ENCODE measurements at regions of chr11 and their contacts with region 1.

Region 1: GRCh38 chr11:130861902-130862860 is 54.1 kb downstream of the SNX19 start:
- DNase-seq: peak; percentile 81
- H3K4me3 Mint-ChIP-seq: no peak overlapping the region
- H3K27ac Mint-ChIP-seq: no peak overlapping the region
- H3K4me1 Mint-ChIP-seq: peaks cover 7% of the 10 kb centered on the region
- H3K27me3 Mint-ChIP-seq: no peaks in the 10 kb centered on the region

Region 2: DNA sequence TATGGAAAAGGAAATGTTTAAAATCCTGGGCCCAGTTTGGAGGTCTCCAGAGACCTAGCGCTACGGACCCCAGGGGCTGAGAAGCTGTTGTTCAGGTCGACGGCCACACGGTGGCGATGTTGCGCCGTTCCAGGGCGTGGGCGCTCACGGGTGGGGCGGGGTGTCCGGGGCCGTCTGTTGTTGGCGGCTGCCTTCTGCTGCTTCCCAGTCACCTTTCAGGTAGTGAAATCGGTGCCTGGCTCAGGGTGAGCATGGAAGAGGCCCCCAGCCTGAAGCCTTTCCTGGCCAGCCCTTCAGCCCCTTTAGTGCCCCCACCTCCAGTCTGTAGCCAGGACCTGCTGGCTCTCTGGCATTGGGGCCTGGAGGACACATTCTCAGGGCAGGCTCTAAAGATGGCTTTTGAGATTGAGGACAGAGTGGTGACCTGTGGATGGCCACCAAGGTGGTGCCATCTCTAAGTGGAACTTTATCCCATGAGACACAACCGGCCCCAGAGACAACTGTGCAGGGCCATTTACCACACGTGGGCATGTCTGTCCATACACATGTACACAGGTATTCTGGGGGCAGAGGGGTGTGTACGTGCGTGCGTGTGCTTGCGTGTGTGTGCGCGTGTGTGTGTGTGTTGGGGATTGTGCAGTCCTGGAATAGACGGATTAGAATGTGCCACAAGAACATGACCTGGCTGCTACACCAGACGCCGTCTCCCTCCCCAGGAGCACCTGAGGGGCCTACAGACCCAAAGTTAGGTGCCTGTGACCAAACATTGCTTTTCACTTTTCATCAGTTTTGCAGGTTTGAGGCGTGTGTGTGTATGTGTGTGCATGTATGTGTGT is 648.8 kb before region 1 on chr11:
- intact Hi-C with region 1: loop called (anchors 1 kb)
- DNase-seq: peak; percentile 60
- H3K4me3 Mint-ChIP-seq: no peak overlapping the region
- H3K27ac Mint-ChIP-seq: no peak overlapping the region
- H3K4me1 Mint-ChIP-seq: no peaks in the 10 kb centered on the region
- H3K27me3 Mint-ChIP-seq: peaks cover 6% of the 10 kb centered on the region

Region 3: GRCh38 chr11:130636722-130637517 is 225.3 kb before region 1 on chr11:
- intact Hi-C with region 1: loop called (anchors 10 kb)
- DNase-seq: no peak
- H3K4me3 Mint-ChIP-seq: peak overlapping the region; percentile 0
- H3K27ac Mint-ChIP-seq: peak overlapping the region; percentile 25
- H3K4me1 Mint-ChIP-seq: peaks cover 52% of the 10 kb centered on the region
- H3K27me3 Mint-ChIP-seq: no peaks in the 10 kb centered on the region

Region 4: DNA sequence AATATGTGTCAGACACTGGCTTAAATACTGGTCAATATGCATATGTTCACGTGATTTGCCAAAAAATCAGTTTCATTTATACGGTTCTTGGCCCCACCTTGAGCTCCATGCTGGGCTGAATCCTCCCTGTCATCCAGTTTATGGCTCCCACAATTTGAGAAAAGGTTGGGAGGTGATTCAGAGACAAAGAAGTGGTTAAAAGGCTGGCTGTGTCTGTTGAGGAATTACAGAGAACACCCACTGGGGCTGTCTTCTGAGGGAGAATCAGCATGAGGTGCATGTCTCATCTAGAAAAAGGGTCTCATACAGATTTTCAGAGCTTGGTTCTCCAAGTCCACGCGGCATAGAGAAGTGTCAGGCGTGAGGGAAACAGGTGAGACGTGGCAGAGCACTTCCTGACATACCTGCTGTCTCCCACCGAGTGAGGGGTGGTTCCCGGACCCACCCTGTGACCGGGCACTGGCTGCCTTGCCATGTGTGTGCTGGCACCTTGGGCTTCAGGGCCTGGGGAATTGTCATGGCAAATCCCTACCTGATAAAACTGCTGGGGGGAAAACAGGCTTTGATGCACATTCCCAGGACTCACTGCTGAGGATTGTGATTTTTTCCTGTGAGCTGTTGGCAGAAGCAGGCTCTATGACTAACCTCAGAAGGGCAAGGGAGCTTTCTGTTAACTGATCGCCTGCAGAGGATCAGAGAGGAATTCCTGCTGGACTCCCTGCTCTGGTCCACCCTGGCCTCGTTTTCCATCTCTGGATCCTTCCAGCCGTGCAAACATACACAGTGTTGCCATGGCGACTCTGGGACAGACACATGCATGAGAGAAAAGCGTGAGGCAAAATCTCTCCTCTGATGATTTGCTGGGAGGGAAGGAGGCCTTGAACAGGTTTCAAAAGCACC is 190.1 kb before region 1 on chr11:
- intact Hi-C with region 1: no loop called
- DNase-seq: no peak
- H3K4me3 Mint-ChIP-seq: no peak overlapping the region
- H3K27ac Mint-ChIP-seq: no peak overlapping the region
- H3K4me1 Mint-ChIP-seq: no peaks in the 10 kb centered on the region
- H3K27me3 Mint-ChIP-seq: peaks cover 3% of the 10 kb centered on the region

Region 5: DNA sequence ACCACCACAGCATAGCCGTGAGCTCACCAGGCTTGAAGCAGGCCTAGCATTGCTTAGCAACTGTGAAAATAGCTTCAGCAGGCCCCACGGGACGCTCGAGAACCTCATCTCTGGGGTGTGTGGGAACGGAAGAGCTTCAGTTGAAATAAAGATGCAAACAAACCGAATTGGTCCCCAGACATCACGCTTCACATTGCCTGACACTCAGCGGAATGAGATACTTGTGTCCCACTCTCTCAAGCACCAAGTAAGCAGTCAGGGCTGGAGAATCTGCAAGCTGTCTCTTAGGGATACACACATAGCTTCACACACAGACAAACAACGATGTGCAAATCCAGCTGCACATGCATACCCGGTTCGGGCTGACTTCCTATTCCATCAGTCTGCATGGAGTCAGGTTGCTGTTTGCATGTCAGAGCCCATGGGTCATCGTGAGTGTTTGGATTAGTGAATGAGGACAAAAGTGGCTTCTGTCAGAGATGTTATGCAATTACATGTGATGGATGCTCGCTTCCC is 151.6 kb before region 1 on chr11:
- intact Hi-C with region 1: no loop called
- DNase-seq: no peak
- H3K4me3 Mint-ChIP-seq: no peak overlapping the region
- H3K27ac Mint-ChIP-seq: no peak overlapping the region
- H3K4me1 Mint-ChIP-seq: no peaks in the 10 kb centered on the region
- H3K27me3 Mint-ChIP-seq: peaks cover 8% of the 10 kb centered on the region

Region 6: GRCh38 chr11:130894322-130895025 is 32.3 kb after region 1 on chr11:
- intact Hi-C with region 1: loop called (anchors 1 kb)
- DNase-seq: peak; percentile 46
- H3K4me3 Mint-ChIP-seq: no peak overlapping the region
- H3K27ac Mint-ChIP-seq: no peak overlapping the region
- H3K4me1 Mint-ChIP-seq: no peaks in the 10 kb centered on the region
- H3K27me3 Mint-ChIP-seq: no peaks in the 10 kb centered on the region

Region 7: DNA sequence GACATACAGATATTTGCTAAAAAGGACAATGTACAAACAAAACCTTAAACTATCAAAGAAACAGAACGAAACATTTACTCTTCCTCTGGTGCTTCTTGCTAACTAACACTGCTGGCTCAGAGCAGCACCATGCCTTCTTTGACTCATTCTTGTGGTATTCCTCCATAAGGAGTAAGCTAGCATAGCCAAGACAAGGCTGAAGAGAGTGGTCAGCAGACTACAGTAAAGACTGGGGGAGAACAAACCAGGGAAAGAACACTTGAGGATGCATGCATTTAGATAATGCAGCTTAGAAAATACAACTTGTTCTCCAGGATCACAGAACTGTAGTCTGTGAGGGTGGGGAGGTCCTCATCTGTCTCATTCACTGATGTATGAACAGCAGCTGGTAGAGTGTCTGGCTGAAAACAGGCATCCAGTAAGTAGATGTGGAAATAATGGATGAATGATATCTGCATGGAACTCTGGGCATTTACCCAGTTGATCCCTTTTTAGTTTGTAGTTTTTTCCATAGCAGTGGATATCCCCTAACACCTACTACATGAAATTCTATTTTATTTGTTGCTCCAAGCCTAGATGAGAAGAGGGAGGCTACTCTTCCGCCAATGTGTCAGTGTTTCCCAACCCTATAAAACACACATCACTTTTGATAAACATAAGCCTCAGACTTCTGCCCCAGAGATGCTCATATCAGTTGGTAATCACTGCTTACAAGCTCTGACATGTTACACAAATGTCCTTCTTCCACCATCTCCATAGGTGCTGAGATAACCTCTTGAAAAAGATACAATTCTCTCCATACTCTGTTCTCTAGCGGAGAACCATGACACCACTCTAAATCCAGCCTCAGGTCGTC is 46.8 kb after region 1 on chr11:
- intact Hi-C with region 1: no loop called
- DNase-seq: no peak
- H3K4me3 Mint-ChIP-seq: no peak overlapping the region
- H3K27ac Mint-ChIP-seq: no peak overlapping the region
- H3K4me1 Mint-ChIP-seq: peaks cover 19% of the 10 kb centered on the region
- H3K27me3 Mint-ChIP-seq: no peaks in the 10 kb centered on the region